Activated B cell treated with CpG ODN at 0.5 μM for 24 hours (primary cell): ENCODE measurements at regions of chr22 and their contacts with region 1.

Region 1: GRCh38 chr22:18077639-18078328 is at the start of gene PEX26:
- DNase-seq: peak; percentile 84
- ATAC-seq: peak; percentile 98
- H3K4me3 Mint-ChIP-seq: peak within 1 kb of the TSS; percentile 95
- H3K27ac Mint-ChIP-seq: peak within 1 kb of the TSS; percentile 97
- H3K4me1 Mint-ChIP-seq: peaks cover 50% of the 10 kb centered on the region
- H3K27me3 Mint-ChIP-seq: no peaks in the 10 kb centered on the region
- CTCF ChIP-seq: no peak
- total RNA-seq, gene PEX26: 31.5 and 35.2 TPM in 2 replicates

Region 2: GRCh38 chr22:17628304-17629166 is 449.2 kb before region 1 on chr22 and contains the start of gene ATP6V1E1:
- CTCF ChIA-PET with region 1: no interaction called
- POLR2A ChIA-PET with region 1: no interaction called
- intact Hi-C with region 1: loop called (anchors 1 kb)
- DNase-seq: peak; percentile 94
- ATAC-seq: peak; percentile 100
- H3K4me3 Mint-ChIP-seq: peak within 1 kb of the TSS; percentile 98
- H3K27ac Mint-ChIP-seq: peak within 1 kb of the TSS; percentile 97
- H3K4me1 Mint-ChIP-seq: peaks cover 32% of the 10 kb centered on the region
- H3K27me3 Mint-ChIP-seq: no peaks in the 10 kb centered on the region
- CTCF ChIP-seq: no peak
- total RNA-seq, gene ATP6V1E1: 73.9 and 74.0 TPM in 2 replicates

Region 3: GRCh38 chr22:17785185-17786184 is 292.3 kb before region 1 on chr22:
- CTCF ChIA-PET with region 1: interaction called, 13 read pairs
- POLR2A ChIA-PET with region 1: interaction called, 3 read pairs
- intact Hi-C with region 1: no loop called
- DNase-seq: peak; percentile 65
- ATAC-seq: peak; percentile 30
- H3K4me3 Mint-ChIP-seq: no peak overlapping the region
- H3K27ac Mint-ChIP-seq: peak overlapping the region; percentile 59
- H3K4me1 Mint-ChIP-seq: peaks cover 34% of the 10 kb centered on the region
- H3K27me3 Mint-ChIP-seq: no peaks in the 10 kb centered on the region
- CTCF ChIP-seq: no peak

Region 4: DNA sequence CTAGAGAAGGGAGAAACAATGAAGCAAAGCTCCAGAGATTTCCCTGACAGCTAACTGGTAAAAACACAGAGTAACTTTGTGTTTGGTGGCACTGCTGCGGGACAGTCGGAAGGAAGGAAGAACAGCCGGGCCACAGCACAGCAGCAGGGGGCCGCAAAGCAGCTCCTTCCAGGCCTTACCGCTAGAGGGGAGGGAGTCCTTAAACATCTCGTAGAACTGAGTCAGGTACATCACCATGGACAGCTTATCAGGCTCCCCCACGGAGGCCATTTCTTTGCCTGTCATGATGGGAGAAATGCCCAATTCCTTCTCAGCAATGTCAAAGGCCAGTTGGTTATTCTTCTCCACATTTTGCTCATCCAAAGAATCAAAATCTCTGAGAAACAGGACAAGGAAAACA is 188.9 kb before region 1 on chr22:
- CTCF ChIA-PET with region 1: interaction called, 9 read pairs
- POLR2A ChIA-PET with region 1: interaction called, 3 read pairs
- intact Hi-C with region 1: loop called (anchors 2 kb)
- DNase-seq: no peak
- ATAC-seq: no peak
- H3K4me3 Mint-ChIP-seq: no peak overlapping the region
- H3K27ac Mint-ChIP-seq: no peak overlapping the region
- H3K4me1 Mint-ChIP-seq: no peaks in the 10 kb centered on the region
- H3K27me3 Mint-ChIP-seq: no peaks in the 10 kb centered on the region
- CTCF ChIP-seq: no peak

Region 5: GRCh38 chr22:18024276-18024947 is 53.4 kb before region 1 on chr22 and contains the start of gene MICAL3:
- CTCF ChIA-PET with region 1: interaction called, 44 read pairs
- POLR2A ChIA-PET with region 1: interaction called, 5 read pairs
- intact Hi-C with region 1: loop called (anchors 1 kb)
- DNase-seq: peak; percentile 83
- ATAC-seq: peak; percentile 96
- H3K4me3 Mint-ChIP-seq: peak within 1 kb of the TSS; percentile 94
- H3K27ac Mint-ChIP-seq: peak within 1 kb of the TSS; percentile 91
- H3K4me1 Mint-ChIP-seq: peaks cover 18% of the 10 kb centered on the region
- H3K27me3 Mint-ChIP-seq: no peaks in the 10 kb centered on the region
- CTCF ChIP-seq: no peak
- total RNA-seq, gene MICAL3: 232 and 257 TPM in 2 replicates

Region 6: DNA sequence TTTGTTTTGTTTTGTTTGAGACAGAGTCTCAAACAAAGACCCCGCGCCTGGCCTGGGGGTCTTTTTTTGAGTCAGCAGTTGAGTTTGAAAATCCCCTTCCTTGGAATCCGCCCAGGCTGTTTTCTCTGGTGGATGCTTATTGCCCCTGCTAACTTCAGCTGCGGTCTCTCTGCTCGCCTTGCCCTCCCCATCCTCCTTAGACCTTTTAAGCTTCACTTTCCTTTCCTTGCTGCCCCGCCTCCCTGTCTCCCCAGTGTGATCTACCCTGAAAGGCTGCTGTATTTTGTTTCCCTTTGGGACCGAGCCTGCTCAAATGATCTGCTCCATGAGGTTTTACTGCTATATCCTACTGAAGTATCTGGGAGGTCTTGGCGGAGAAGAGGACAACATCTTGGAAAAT is 74.7 kb after region 1 on chr22:
- CTCF ChIA-PET with region 1: interaction called, 4 read pairs
- POLR2A ChIA-PET with region 1: interaction called, 9 read pairs
- intact Hi-C with region 1: loop called (anchors 2 kb)
- DNase-seq: no peak
- ATAC-seq: no peak
- H3K4me3 Mint-ChIP-seq: no peak overlapping the region
- H3K27ac Mint-ChIP-seq: no peak overlapping the region
- H3K4me1 Mint-ChIP-seq: peaks cover 21% of the 10 kb centered on the region
- H3K27me3 Mint-ChIP-seq: no peaks in the 10 kb centered on the region
- CTCF ChIP-seq: no peak